ENCODE measurements at regions of chr1 and their contacts with region 1.

Region 1: GRCh38 chr1:23867953-23868556 is at the start of gene FUCA1:
- DNase-seq: peak; percentile 95
- ATAC-seq: peak; percentile 97
- H3K4me3 Mint-ChIP-seq: peak within 1 kb of the TSS; percentile 76
- H3K27ac Mint-ChIP-seq: peak within 1 kb of the TSS; percentile 77
- H3K4me1 Mint-ChIP-seq: peaks cover 19% of the 10 kb centered on the region
- H3K27me3 Mint-ChIP-seq: no peaks in the 10 kb centered on the region
- total RNA-seq, gene FUCA1: 4.2 to 4.5 TPM

Region 2: GRCh38 chr1:23838401-23838866 is 29.6 kb before region 1 on chr1:
- CTCF ChIA-PET with region 1: interaction called, 3 read pairs
- POLR2A ChIA-PET with region 1: no interaction called
- intact Hi-C with region 1: loop called in 1 of 2 experiments (anchors 1 kb)
- DNase-seq: peak; percentile 84
- ATAC-seq: peak; percentile 98
- H3K4me3 Mint-ChIP-seq: peak overlapping the region; percentile 45
- H3K27ac Mint-ChIP-seq: no peak overlapping the region
- H3K4me1 Mint-ChIP-seq: peaks cover 5% of the 10 kb centered on the region
- H3K27me3 Mint-ChIP-seq: peaks cover 5% of the 10 kb centered on the region

Region 3: DNA sequence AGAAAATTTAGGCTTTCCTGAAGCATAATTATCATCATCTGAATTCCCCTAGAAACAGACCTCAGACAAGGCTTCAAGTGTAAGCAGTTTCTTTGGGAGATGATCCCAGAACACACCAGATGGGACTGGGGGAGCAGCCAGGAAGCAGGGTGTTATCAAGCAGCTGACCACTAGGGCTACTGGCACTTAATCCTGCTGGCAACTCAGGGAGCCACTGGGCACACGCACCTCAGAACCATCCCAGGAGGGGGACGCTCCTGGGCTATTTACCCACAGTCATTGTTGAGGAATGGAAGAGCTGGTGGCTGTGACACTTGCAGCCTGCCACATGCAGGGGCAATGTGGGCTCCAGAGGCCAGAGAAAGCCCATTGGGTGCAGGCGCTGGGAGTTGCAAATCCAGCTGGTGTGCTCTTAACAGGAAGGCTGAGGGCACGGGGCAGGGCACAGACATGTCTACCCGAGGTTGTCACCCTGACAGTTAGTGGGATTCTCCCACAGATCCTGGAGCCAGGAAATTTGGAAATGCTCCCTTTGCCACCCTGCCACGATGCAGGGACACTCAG is 289.9 kb after region 1 on chr1:
- CTCF ChIA-PET with region 1: no interaction called
- POLR2A ChIA-PET with region 1: no interaction called
- intact Hi-C with region 1: no loop called
- DNase-seq: no peak
- ATAC-seq: no peak
- H3K4me3 Mint-ChIP-seq: no peak overlapping the region
- H3K27ac Mint-ChIP-seq: peak overlapping the region; percentile 19
- H3K4me1 Mint-ChIP-seq: no peaks in the 10 kb centered on the region
- H3K27me3 Mint-ChIP-seq: no peaks in the 10 kb centered on the region